CD4-positive, alpha-beta memory T cell (primary cell): ENCODE measurements at regions of chr14 and their contacts with region 1.

Region 1: DNA sequence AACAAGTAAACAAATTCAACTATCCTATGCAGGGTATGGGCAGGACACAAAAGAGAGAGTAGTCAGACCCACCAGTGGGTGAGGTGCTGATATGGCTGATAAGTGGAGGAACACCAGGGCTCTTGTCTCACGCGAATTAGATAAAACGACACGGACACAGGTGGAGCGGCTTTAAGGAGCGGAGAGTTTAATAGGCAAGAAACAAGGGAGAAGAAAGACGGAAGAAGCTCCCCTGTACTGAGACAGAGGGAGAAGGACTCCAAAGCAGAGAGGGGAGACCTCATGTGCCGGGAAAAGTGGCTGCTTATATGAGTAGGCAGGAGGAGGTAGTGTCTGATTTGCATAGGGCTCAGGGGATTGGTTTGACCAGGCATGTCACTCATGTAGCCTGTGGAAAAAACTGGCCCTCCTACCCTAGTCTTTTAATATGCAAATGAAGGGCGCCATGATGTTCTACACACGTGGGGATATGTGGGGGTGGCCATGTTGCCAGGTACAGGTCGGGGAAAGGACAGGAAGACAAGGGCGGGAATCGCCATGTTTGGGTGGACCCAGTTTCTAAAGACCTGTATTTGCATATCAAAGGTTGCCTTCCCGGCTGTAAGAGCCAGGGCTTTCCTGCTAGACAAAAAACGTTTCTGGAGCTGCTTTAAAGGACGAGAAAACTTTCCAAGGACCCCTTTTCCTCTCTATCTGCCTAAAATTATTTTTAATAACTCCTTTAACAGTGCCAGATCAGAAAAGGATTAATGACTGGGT is 28.8 kb downstream of the RPGRIP1 start:
- DNase-seq: peak; percentile 83 to 93 (median 85)
- H3K4me3 ChIP-seq: peak overlapping the region; percentile 43 to 45
- H3K4me3 Mint-ChIP-seq: peak overlapping the region; percentile 81 to 91 (median 88)
- H3K27ac ChIP-seq: peak overlapping the region; percentile 48
- H3K27ac Mint-ChIP-seq: peak overlapping the region; percentile 80 to 96 (median 92)
- H3K4me1 ChIP-seq: peaks cover 13% of the 10 kb centered on the region
- H3K4me1 Mint-ChIP-seq: peaks cover 12 to 19% (median 17%) of the 10 kb centered on the region in 4 donors
- H3K27me3 ChIP-seq: no peaks in the 10 kb centered on the region
- H3K27me3 Mint-ChIP-seq: no peaks in the 10 kb centered on the region

Region 2: DNA sequence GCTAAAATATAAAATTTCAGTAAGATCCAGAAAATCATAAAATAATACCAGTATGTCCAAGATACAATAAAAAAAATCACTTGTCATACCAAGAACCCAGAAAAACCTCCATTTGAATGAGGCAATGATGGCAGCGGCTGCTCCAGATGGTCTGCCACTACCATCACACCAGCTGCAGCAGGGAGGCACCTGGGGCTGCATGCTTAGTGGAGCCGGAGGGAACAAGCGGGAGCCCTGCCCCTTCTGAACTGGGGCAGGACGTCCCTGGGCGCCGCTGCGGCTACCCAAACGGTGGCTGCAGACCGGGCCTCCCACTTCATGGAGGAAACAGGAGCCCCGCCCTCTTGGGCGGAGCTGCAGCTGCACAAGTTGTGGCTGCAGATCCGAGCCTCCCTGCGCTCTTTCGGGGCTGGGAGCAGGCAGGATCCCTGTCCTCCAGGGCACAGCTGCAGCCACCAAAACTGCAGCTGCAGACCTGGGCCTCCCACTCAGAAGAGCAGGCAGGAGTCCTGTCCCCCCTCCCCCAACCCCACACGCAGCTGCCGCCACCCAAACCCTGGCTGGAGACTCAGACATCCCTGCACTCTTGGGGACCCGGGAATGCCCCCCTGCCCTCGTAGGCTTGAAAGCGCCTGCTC is 116.7 kb before region 1 on chr14:
- CTCF ChIA-PET with region 1: no interaction called
- POLR2A ChIA-PET with region 1: no interaction called
- intact Hi-C with region 1: loop called (anchors 2 kb)
- DNase-seq: peak; percentile 59 to 74 (median 65)
- H3K4me3 ChIP-seq: peak overlapping the region; percentile 39 to 40
- H3K4me3 Mint-ChIP-seq: peak overlapping the region; percentile 74 to 83 (median 76)
- H3K27ac ChIP-seq: no peak overlapping the region
- H3K27ac Mint-ChIP-seq: peak overlapping the region in 2 of 7 donors; percentile 15 to 59
- H3K4me1 ChIP-seq: peaks cover 12% of the 10 kb centered on the region
- H3K4me1 Mint-ChIP-seq: peaks cover 0 to 16% (median 5%) of the 10 kb centered on the region in 4 donors
- H3K27me3 ChIP-seq: no peaks in the 10 kb centered on the region
- H3K27me3 Mint-ChIP-seq: no peaks in the 10 kb centered on the region

Region 3: GRCh38 chr14:21383848-21384493 is 75.3 kb after region 1 on chr14 and contains the start of gene SUPT16H:
- CTCF ChIA-PET with region 1: no interaction called
- POLR2A ChIA-PET with region 1: no interaction called
- intact Hi-C with region 1: loop called (anchors 2 kb)
- DNase-seq: peak; percentile 91 to 96 (median 93)
- H3K4me3 ChIP-seq: peak within 1 kb of the TSS; percentile 98 to 99
- H3K4me3 Mint-ChIP-seq: peak within 1 kb of the TSS; percentile 95 to 100 (median 97)
- H3K27ac ChIP-seq: peak within 1 kb of the TSS; percentile 82
- H3K27ac Mint-ChIP-seq: peak within 1 kb of the TSS; percentile 96 to 100 (median 99)
- H3K4me1 ChIP-seq: peaks cover 47% of the 10 kb centered on the region
- H3K4me1 Mint-ChIP-seq: peaks cover 25 to 53% (median 38%) of the 10 kb centered on the region in 4 donors
- H3K27me3 ChIP-seq: no peaks in the 10 kb centered on the region
- H3K27me3 Mint-ChIP-seq: no peaks in the 10 kb centered on the region
- total RNA-seq, gene SUPT16H: 84.5 to 87.2 TPM